CD14-positive monocyte (primary cell): ENCODE measurements at regions of chrX and their contacts with region 1.

Region 1: DNA sequence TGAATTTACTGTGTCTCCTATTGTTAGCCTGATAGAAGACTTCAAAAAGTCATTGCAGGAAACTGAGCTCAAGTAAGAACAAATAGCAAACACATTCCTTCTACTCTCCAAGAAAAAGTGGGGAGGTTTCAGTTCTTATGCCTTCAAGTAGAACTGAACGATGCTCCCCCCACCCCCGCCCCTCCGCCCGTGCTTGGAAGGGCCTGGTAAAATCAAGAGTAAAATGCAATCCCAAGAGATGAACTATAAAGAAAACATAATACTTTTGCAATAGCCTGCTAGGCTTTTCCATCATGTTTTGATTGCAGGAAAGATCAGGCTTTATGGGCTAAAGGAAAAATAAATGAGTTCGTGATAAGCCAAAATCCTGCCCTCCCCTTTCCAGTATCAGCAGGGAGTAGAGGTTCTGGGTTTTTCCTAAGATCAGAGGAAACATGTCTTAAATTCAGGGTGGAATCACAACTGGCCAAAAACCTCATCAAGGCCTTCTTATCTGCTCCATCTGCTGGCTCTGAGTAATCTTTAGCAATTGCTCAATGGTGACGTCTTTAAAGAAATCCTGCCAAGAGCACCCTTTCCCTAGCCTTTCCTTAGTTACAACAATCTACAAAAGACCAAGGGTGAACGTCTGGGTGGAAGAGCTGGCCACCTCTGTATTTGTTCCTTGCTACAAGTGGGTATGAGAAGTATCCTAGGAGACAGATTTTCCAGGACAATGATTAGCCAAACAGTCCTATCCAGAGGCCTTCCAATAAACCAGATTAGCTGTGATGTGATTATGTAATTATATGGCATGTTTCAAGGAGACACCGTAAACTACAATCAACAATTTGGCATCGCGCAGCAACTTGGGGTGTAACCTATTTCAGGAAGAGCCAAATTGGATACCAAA is 66.3 kb upstream of the FAM9C start:
- DNase-seq: peak; percentile 37 to 56 (median 53)
- H3K4me3 ChIP-seq: no peak overlapping the region
- H3K4me3 Mint-ChIP-seq: no peak overlapping the region
- H3K27ac ChIP-seq: no peak overlapping the region
- H3K27ac Mint-ChIP-seq: peak overlapping the region in 2 of 7 donors; percentile 37 to 48
- H3K4me1 ChIP-seq: peaks cover 0 to 3% of the 10 kb centered on the region in 2 donors
- H3K4me1 Mint-ChIP-seq: peaks cover 9% of the 10 kb centered on the region
- H3K27me3 ChIP-seq: peaks cover 0 to 25% of the 10 kb centered on the region in 2 donors
- H3K27me3 Mint-ChIP-seq: peaks cover 0 to 38% (median 0%) of the 10 kb centered on the region in 3 donors
- CTCF ChIP-seq: no peak

Region 2: DNA sequence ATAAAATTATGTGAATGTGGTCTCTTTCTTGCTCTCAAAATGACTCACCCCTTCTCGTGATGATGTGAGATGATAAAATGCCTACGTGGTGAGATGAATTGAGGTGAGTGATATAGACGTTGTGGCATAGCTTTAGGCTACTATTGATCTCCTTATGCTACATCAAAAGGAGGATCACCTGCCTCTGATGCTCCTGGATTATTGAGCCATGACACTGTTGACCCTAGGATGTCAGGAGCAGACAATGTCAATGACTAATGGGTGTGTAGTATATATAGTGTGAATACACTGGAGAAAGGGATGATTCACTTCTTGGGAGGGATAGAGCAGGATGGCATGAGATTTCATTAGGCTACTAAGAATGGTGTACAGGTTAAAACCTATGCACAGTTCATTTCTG is 530.1 kb before region 1 on chrX:
- intact Hi-C with region 1: no loop called
- DNase-seq: no peak
- H3K4me3 ChIP-seq: no peak overlapping the region
- H3K4me3 Mint-ChIP-seq: no peak overlapping the region
- H3K27ac ChIP-seq: no peak overlapping the region
- H3K27ac Mint-ChIP-seq: no peak overlapping the region
- H3K4me1 ChIP-seq: no peaks in the 10 kb centered on the region
- H3K4me1 Mint-ChIP-seq: no peaks in the 10 kb centered on the region
- H3K27me3 ChIP-seq: peaks cover 0 to 2% of the 10 kb centered on the region in 2 donors
- H3K27me3 Mint-ChIP-seq: peaks cover 0 to 4% (median 2%) of the 10 kb centered on the region in 3 donors
- CTCF ChIP-seq: no peak

Region 3: DNA sequence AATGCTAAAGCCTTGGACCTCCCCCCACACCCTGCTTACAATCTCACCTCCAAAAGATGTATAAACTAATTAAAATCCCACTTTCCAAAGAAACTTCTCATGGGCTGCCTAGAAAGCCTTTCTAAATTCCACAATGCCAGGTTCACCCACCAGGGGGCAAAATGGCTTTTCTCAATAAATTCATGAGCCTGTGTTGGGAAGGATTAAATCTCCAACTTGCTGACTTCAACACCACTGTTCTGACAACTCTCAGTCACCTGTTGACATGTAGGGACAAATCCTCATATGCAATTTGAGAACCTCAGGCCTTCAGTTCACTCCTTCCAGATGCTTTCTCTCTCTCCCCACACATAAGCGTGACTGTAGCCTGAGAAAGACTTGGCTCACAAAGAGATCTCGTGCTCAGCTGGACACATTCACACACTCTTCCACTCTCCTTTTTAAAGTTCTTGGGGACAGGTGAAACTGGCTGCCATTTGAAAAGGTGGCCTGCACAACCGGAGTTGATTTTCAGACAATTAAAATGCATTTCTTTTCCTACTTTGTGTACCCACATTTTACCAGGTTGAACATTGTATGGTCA is 408.1 kb before region 1 on chrX:
- intact Hi-C with region 1: no loop called
- DNase-seq: no peak
- H3K4me3 ChIP-seq: no peak overlapping the region
- H3K4me3 Mint-ChIP-seq: no peak overlapping the region
- H3K27ac ChIP-seq: no peak overlapping the region
- H3K27ac Mint-ChIP-seq: no peak overlapping the region
- H3K4me1 ChIP-seq: no peaks in the 10 kb centered on the region
- H3K4me1 Mint-ChIP-seq: peaks cover 3% of the 10 kb centered on the region
- H3K27me3 ChIP-seq: peaks cover 0 to 6% of the 10 kb centered on the region in 2 donors
- H3K27me3 Mint-ChIP-seq: peaks cover 0 to 16% (median 1%) of the 10 kb centered on the region in 3 donors
- CTCF ChIP-seq: peak; percentile 21

Region 4: GRCh38 chrX:13167481-13168231 is 57.0 kb after region 1 on chrX:
- intact Hi-C with region 1: loop called in 1 of 2 experiments (anchors 10 kb)
- DNase-seq: peak; percentile 47 to 65 (median 51)
- H3K4me3 ChIP-seq: peak overlapping the region in 1 of 3 experiments; percentile 47
- H3K4me3 Mint-ChIP-seq: peak overlapping the region; percentile 20 to 52
- H3K27ac ChIP-seq: peak overlapping the region; percentile 3 to 73
- H3K27ac Mint-ChIP-seq: peak overlapping the region; percentile 56 to 93 (median 86)
- H3K4me1 ChIP-seq: peaks cover 22 to 23% of the 10 kb centered on the region in 2 donors
- H3K4me1 Mint-ChIP-seq: peaks cover 23% of the 10 kb centered on the region
- H3K27me3 ChIP-seq: peaks cover 0 to 30% of the 10 kb centered on the region in 2 donors
- H3K27me3 Mint-ChIP-seq: peaks cover 1 to 33% (median 5%) of the 10 kb centered on the region in 3 donors
- CTCF ChIP-seq: no peak

Region 5: GRCh38 chrX:14029425-14030173 is 918.9 kb after region 1 on chrX and contains the start of gene GEMIN8:
- intact Hi-C with region 1: no loop called
- DNase-seq: peak; percentile 75 to 84 (median 80)
- H3K4me3 ChIP-seq: peak within 1 kb of the TSS; percentile 49 to 80 (median 79)
- H3K4me3 Mint-ChIP-seq: peak within 1 kb of the TSS; percentile 86 to 97
- H3K27ac ChIP-seq: peak within 1 kb of the TSS; percentile 58 to 84
- H3K27ac Mint-ChIP-seq: peak within 1 kb of the TSS; percentile 93 to 99 (median 95)
- H3K4me1 ChIP-seq: peaks cover 12 to 15% of the 10 kb centered on the region in 2 donors
- H3K4me1 Mint-ChIP-seq: peaks cover 17% of the 10 kb centered on the region
- H3K27me3 ChIP-seq: peaks cover 0 to 22% of the 10 kb centered on the region in 2 donors
- H3K27me3 Mint-ChIP-seq: peaks cover 0 to 33% (median 1%) of the 10 kb centered on the region in 3 donors
- CTCF ChIP-seq: no peak
- polyA plus RNA-seq, gene GEMIN8: 10.9 to 15.0 (median 12.6) TPM